ENCODE measurements at regions of chr12 and their contacts with region 1.

Region 1: GRCh38 chr12:50111693-50112455 is at the start of gene COX14:
- DNase-seq: peak; percentile 99
- ATAC-seq: peak; percentile 91
- H3K4me3 Mint-ChIP-seq: peak within 1 kb of the TSS; percentile 95
- H3K27ac Mint-ChIP-seq: peak within 1 kb of the TSS; percentile 99
- H3K4me1 Mint-ChIP-seq: peaks cover 39% of the 10 kb centered on the region
- H3K27me3 Mint-ChIP-seq: no peaks in the 10 kb centered on the region
- total RNA-seq, gene COX14: 50.0 to 51.6 TPM

Region 2: GRCh38 chr12:49967042-49967776 is 144.7 kb before region 1 on chr12:
- CTCF ChIA-PET with region 1: interaction called, 22 read pairs
- POLR2A ChIA-PET with region 1: no interaction called
- DNase-seq: peak; percentile 94
- ATAC-seq: peak; percentile 92
- H3K4me3 Mint-ChIP-seq: peak overlapping the region; percentile 60
- H3K27ac Mint-ChIP-seq: no peak overlapping the region
- H3K4me1 Mint-ChIP-seq: peaks cover 5% of the 10 kb centered on the region
- H3K27me3 Mint-ChIP-seq: peaks cover 36% of the 10 kb centered on the region

Region 3: DNA sequence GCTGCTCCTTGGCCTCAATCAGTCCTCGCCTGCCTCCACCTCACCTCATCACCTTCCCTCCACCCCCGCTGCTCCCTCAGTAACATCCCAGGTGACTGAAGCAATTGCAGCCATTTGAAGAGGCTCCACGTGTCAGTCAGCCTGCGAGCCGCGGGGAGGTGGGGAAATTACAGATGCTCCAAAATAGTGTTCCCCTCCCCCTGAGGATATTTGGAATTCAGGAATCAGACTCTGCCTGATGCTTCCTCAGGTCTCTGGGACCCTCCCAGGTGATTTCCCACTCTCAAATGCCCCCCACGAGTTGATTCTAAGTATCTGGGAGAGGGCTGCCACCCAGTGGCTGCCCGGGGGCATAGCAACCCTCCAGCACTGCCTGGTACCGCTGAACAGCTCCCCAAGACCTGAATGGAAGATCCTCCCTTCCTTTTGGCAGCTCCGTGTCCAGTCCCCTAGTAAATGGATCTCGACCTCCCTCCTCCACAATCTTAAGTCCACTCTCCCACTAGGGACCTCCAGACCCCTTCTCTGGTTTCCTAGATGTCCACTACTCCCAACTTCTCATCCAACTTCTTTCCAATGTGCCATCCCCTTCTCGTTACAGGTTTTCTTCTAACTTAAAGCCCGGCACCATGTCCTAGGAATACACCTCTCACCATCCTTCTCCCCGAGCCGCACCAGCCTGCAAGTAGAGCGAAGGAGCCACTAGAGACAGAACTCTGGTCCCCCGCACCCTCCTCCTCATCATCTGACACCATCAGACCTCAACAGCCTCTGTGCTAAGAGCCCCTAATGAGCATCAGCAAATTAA is 55.8 kb before region 1 on chr12:
- CTCF ChIA-PET with region 1: interaction called, 18 read pairs
- POLR2A ChIA-PET with region 1: interaction called, 6 read pairs
- DNase-seq: peak; percentile 72
- ATAC-seq: peak; percentile 20
- H3K4me3 Mint-ChIP-seq: peak overlapping the region; percentile 41
- H3K27ac Mint-ChIP-seq: no peak overlapping the region
- H3K4me1 Mint-ChIP-seq: peaks cover 45% of the 10 kb centered on the region
- H3K27me3 Mint-ChIP-seq: peaks cover 34% of the 10 kb centered on the region

Region 4: DNA sequence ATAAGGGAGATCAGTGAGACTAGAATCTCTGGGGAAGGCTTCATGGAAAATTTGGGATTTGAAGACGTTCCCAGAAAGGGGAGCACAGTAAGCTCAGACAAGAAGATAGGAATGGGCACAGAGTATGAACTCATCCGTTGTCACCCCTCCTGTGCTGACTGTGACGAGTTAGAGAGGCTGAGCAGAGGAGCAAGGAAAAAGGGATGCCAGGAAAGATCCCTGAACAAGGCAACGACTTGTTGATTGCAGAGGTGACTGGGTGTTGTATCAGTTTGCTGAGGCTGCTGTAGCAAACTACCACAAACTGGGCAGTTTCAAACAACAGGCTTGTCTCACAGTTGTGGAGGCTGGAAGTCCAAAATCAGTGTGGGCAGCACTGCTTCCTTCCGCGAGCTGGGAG is 13.9 kb before region 1 on chr12:
- CTCF ChIA-PET with region 1: interaction called, 42 read pairs
- POLR2A ChIA-PET with region 1: interaction called, 6 read pairs
- DNase-seq: no peak
- ATAC-seq: no peak
- H3K4me3 Mint-ChIP-seq: no peak overlapping the region
- H3K27ac Mint-ChIP-seq: no peak overlapping the region
- H3K4me1 Mint-ChIP-seq: no peaks in the 10 kb centered on the region
- H3K27me3 Mint-ChIP-seq: no peaks in the 10 kb centered on the region

Region 5: DNA sequence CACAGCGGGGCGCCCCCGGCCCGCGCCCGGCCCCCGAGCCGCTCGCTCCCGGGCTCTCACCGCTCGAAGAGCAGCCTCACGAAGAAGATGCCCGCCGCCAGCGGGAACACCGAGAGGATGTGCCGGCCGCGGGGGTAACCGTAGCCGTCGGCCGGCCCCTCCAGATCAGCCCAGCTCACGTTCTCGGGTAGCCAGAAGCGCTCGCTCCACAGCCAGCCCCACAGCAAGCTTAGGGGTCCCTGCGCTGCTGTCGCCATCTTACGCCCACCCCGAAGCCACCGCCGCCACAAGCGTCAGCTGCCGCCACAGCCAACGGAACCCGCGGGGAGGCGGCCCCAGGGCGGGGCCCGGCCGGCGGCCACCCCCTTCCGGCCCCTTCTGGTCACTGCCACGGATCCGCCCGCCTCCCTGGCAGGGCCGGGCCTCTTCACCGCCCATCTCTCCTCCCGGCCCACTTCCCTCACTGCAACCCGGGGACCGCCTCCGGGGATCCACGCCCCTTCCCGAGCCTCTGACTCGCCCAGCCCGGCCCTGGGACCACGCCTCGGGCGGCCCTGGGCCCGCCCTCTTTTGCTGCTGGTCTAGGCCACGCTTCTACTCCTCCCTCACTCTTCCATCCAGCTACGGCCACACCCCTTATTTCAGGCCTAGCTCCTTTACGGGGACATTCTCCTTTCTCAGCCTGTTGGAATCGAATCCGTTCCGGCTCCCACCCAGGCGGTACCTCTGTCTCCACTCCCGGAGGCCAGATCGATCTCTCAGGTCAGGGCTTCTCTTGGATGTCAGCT is 55.4 kb after region 1 on chr12 and contains the start of gene CERS5:
- CTCF ChIA-PET with region 1: interaction called, 141 read pairs
- POLR2A ChIA-PET with region 1: interaction called, 25 read pairs
- DNase-seq: peak; percentile 99
- ATAC-seq: peak; percentile 99
- H3K4me3 Mint-ChIP-seq: peak within 1 kb of the TSS; percentile 87
- H3K27ac Mint-ChIP-seq: peak within 1 kb of the TSS; percentile 98
- H3K4me1 Mint-ChIP-seq: peaks cover 27% of the 10 kb centered on the region
- H3K27me3 Mint-ChIP-seq: no peaks in the 10 kb centered on the region
- total RNA-seq, gene CERS5: 38.7 to 40.6 TPM

Region 6: GRCh38 chr12:50211392-50212070 is 99.7 kb after region 1 on chr12:
- CTCF ChIA-PET with region 1: interaction called, 21 read pairs
- POLR2A ChIA-PET with region 1: interaction called, 3 read pairs
- DNase-seq: no peak
- ATAC-seq: peak; percentile 39
- H3K4me3 Mint-ChIP-seq: peak overlapping the region; percentile 32
- H3K27ac Mint-ChIP-seq: peak overlapping the region; percentile 85
- H3K4me1 Mint-ChIP-seq: peaks cover 39% of the 10 kb centered on the region
- H3K27me3 Mint-ChIP-seq: no peaks in the 10 kb centered on the region

Region 7: GRCh38 chr12:50314629-50315312 is 202.9 kb after region 1 on chr12:
- CTCF ChIA-PET with region 1: interaction called, 23 read pairs
- POLR2A ChIA-PET with region 1: no interaction called
- DNase-seq: no peak
- ATAC-seq: no peak
- H3K4me3 Mint-ChIP-seq: no peak overlapping the region
- H3K27ac Mint-ChIP-seq: no peak overlapping the region
- H3K4me1 Mint-ChIP-seq: no peaks in the 10 kb centered on the region
- H3K27me3 Mint-ChIP-seq: no peaks in the 10 kb centered on the region